Gastrocnemius medialis (tissue), 4 donors: ENCODE measurements at regions of chr19 and their contacts with region 1.

Region 1: GRCh38 chr19:48170038-48170812 is at the starts of genes LIG1 and ZSWIM9:
- DNase-seq: peak; percentile 75 to 78
- ATAC-seq: peak; percentile 96 to 97
- H3K4me3 ChIP-seq: peak within 1 kb of the TSS; percentile 90 to 95 (median 93)
- H3K27ac ChIP-seq: peak within 1 kb of the TSS; percentile 95 to 99 (median 98)
- H3K4me1 ChIP-seq: peaks cover 6 to 15% of the 10 kb centered on the region in 2 donors
- H3K27me3 ChIP-seq: no peaks in the 10 kb centered on the region
- CTCF ChIP-seq: peak in 2 of 5 experiments; percentile 32 to 35
- POLR2A ChIP-seq: no peak
- total RNA-seq, gene LIG1: 3.7 to 9.2 (median 7.1) TPM
- total RNA-seq, gene ZSWIM9: 1.6 to 8.4 (median 2.8) TPM

Region 2: DNA sequence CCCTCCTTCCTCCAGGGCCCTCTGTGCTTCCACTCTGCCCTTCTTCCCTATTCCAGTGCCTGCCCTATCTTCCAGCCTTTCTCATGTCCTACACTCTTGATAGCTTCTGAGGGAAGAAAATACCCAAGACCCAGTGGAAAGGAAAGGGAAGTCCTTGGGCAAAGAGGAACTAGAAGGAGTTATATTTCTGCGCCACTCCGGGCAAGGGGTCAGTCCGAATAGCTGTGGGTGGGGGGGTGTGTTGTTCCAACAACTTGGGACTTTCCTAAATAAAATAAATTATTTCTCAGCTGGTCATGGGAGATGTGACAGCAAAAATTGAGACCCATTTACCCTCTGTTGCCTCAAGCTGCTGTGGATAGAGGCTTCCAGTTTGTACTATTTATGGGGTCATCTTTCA is 149.5 kb before region 1 on chr19:
- in situ Hi-C with region 1: no loop called
- intact Hi-C with region 1: no loop called
- DNase-seq: no peak
- ATAC-seq: no peak
- H3K4me3 ChIP-seq: no peak overlapping the region
- H3K27ac ChIP-seq: no peak overlapping the region
- H3K4me1 ChIP-seq: no peaks in the 10 kb centered on the region
- H3K27me3 ChIP-seq: no peaks in the 10 kb centered on the region
- CTCF ChIP-seq: no peak
- POLR2A ChIP-seq: no peak

Region 3: DNA sequence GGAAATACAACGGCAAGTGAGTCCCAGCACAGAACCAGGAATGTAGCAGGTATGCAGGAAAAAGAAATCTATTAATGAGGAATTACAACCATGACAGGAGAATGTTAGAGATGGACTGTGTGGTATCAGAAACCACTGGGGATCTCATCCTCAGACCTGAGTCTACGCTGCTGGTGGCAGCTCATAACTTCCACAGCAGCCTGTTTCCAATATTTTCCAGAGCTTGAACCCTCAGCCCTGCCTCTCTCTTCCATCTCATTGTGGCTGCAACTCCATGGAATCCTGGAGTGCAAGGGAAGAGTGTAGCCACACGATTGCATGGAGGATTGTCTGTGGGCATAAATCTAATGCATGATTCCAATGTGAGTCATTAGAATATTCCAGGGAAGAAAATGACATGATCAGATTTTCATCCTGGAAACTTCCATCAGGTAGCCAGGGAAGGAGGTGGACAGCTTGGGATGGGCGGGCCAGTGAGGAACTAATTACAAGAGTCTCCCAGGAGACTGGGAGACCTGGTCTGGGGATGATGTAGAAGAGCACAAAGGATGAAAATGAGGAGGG is 74.5 kb before region 1 on chr19:
- in situ Hi-C with region 1: no loop called
- intact Hi-C with region 1: no loop called
- DNase-seq: no peak
- ATAC-seq: no peak
- H3K4me3 ChIP-seq: no peak overlapping the region
- H3K27ac ChIP-seq: no peak overlapping the region
- H3K4me1 ChIP-seq: no peaks in the 10 kb centered on the region
- H3K27me3 ChIP-seq: no peaks in the 10 kb centered on the region
- CTCF ChIP-seq: no peak
- POLR2A ChIP-seq: no peak

Region 4: GRCh38 chr19:48203732-48204628 is 33.8 kb after region 1 on chr19:
- in situ Hi-C with region 1: no loop called
- intact Hi-C with region 1: loop called (anchors 2 kb)
- DNase-seq: peak; percentile 84 to 90
- ATAC-seq: peak; percentile 98 to 99
- H3K4me3 ChIP-seq: peak overlapping the region; percentile 55 to 88 (median 79)
- H3K27ac ChIP-seq: peak overlapping the region; percentile 69 to 85 (median 72)
- H3K4me1 ChIP-seq: peaks cover 10 to 12% of the 10 kb centered on the region in 2 donors
- H3K27me3 ChIP-seq: no peaks in the 10 kb centered on the region
- CTCF ChIP-seq: no peak
- POLR2A ChIP-seq: peak; percentile 27 to 44

Region 5: DNA sequence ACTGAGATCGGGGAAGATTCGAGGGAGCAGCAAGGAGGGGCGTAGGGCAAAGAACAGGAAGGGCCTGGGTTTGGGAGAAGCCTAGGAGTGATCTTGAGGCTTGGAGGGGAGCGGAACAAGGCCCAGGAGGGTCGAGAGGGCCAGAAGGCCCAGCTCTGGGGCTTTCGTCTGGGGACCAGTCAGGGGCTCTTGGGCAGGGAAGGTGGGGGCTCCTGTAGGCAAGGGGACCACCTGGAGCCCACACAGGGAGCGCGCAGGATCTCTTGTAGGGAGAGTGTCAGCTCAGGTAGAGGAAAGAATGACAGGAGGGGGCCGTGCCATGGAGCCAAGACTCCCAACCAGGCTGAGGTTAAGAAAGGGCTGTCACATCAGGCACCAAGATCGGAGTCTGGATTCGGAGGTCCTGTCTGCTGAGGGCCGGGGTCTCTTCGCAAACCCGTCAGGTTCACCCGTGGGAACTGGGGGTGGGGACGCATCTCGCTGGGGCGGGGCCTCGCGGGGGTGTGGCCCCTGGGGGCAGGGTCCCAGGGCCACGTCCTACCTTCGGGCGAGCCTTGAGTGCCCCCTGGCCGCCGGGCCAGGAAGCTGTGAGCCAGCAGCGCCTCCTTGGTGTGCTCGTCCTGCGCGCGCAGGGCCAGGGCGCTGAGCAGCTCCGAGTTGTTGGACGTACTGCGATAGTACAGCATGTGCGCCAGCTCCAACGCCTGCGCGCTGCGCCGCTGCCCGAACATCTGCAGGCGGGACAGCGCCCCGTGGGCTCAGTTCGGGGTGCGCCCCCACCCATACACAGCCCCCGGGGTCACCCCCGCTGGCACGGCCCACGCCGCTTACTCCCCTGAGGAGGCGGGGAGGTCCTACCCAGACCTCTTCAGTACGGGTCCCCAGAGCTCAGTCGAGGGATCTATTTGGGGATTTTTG is 163.5 kb after region 1 on chr19:
- in situ Hi-C with region 1: no loop called
- intact Hi-C with region 1: no loop called
- DNase-seq: peak; percentile 60 to 72
- ATAC-seq: peak; percentile 25 to 31
- H3K4me3 ChIP-seq: peak overlapping the region; percentile 49 to 58 (median 52)
- H3K27ac ChIP-seq: peak overlapping the region; percentile 82 to 84 (median 83)
- H3K4me1 ChIP-seq: peaks cover 10 to 15% of the 10 kb centered on the region in 2 donors
- H3K27me3 ChIP-seq: no peaks in the 10 kb centered on the region
- CTCF ChIP-seq: peak; percentile 23 to 76 (median 73)
- POLR2A ChIP-seq: no peak